Activated CD4-positive, alpha-beta T cell treated with anti-CD3 and anti-CD28 coated beads for 36 hours (primary cell): ENCODE measurements at regions of chr1 and their contacts with region 1.

Region 1: GRCh38 chr1:32508751-32509140 is 30.5 kb upstream of the ZBTB8A start:
- DNase-seq: no peak
- ATAC-seq: no peak
- H3K4me3 Mint-ChIP-seq: no peak overlapping the region
- H3K27ac Mint-ChIP-seq: no peak overlapping the region
- H3K4me1 Mint-ChIP-seq: no peaks in the 10 kb centered on the region
- H3K27me3 Mint-ChIP-seq: peaks cover 15% of the 10 kb centered on the region

Region 2: DNA sequence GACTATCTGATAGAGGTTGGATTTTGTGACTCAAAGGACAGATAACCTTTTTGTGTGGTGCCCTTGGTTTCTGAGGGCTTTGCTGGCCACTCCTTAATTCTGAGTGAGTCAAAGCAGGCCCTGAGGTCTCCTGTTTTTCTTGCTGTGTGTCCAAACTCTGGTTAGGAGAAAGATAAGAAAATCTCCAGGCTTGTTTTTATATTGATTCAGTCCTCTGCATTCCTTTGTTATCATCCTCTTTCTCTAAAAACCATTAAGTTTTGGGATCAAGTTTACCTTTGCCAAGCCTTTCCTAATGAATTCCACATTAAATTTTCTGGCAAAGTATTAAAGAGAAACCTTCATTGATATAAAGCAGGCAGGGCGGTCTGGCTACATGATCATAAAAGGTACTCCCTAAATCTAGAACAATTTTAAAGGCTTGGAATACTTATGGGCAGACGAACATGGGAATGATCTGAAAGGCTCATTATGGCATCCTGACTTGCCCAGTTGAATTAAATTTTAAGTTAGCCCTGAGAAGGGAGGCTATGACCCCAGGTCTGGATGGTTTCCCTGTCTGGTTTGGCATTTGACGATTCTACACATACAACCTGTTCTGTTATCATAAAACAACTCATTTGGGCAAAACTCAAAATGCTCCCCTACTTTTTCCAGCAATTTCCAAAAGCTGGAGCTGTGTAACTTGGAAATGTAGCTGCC is 23.0 kb before region 1 on chr1:
- CTCF ChIA-PET with region 1: interaction called, 3 read pairs
- POLR2A ChIA-PET with region 1: no interaction called
- intact Hi-C with region 1: loop called in 1 of 2 experiments (anchors 1 kb)
- DNase-seq: no peak
- ATAC-seq: no peak
- H3K4me3 Mint-ChIP-seq: no peak overlapping the region
- H3K27ac Mint-ChIP-seq: no peak overlapping the region
- H3K4me1 Mint-ChIP-seq: no peaks in the 10 kb centered on the region
- H3K27me3 Mint-ChIP-seq: peaks cover 3% of the 10 kb centered on the region

Region 3: DNA sequence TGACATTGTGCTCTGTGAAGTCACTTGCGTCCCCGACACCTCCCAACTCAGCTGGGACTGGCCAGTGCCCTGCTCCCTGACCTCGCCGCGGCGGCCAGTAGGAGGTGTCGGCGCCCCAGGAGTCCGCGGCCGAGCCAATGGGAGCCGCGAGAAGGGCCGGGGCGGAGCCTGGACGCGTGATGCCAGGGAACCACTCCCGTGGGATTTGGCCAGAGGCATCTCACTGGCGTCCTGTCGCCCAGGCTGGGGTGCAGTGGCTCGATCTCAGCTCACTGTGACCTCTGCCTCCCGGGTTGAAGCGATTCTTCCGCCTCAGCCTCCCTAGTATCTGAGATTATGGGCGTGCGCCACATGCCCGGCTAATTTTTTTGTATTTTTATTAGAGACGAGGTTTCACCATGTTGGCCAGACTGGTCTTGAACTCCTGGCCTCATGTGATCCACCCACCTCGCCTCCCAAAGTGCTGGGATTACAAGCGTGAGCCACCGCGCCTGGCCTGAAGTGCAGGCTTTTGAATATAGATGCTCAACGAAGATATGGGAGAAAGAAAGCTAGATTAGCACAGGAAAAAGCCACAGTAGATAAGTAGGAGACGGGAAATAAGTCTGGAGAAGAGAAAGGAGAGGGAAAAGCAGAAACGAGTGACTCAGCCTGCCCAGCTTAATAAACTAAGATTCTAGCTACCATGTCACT is 103.6 kb after region 1 on chr1:
- CTCF ChIA-PET with region 1: no interaction called
- POLR2A ChIA-PET with region 1: no interaction called
- intact Hi-C with region 1: no loop called
- DNase-seq: peak; percentile 75
- ATAC-seq: peak; percentile 99
- H3K4me3 Mint-ChIP-seq: peak overlapping the region; percentile 57
- H3K27ac Mint-ChIP-seq: no peak overlapping the region
- H3K4me1 Mint-ChIP-seq: peaks cover 7% of the 10 kb centered on the region
- H3K27me3 Mint-ChIP-seq: no peaks in the 10 kb centered on the region